Mucosa of descending colon (tissue), 3 donors: ENCODE measurements at regions of chr5 and their contacts with region 1.

Region 1: DNA sequence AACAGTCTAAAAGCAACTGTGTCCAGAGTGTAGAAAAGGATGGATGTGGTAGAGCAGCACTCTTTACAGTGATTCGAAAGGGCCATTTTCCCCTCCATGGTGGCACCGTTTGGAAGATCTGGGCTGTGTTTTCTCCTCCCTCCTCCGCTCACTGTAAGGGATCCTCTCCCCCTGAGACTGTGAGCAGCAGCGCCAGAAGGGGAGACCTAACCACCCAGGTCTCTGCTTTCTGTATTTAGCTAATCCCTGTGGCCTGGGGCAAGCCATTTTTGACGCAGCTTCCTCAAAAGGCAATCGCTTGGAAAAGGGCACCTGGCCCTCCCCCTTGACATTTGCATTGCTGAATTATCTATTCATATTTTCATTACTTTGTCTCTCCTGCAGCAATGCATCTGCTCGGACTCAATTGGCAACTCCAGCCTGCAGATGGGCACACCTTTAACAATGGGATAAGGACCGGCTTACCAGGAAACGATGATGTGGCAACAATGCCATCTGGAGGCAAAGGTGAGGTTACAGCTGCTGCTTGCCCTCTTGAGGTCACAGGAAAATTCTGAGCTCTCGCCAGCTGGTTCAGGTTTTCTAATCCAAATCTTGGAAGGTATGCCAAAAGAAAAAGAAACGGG is 244.3 kb upstream of the WWC1 start:
- DNase-seq: peak in 2 of 3 donors; percentile 42 to 70
- ATAC-seq: peak; percentile 95
- H3K4me3 ChIP-seq: no peak overlapping the region
- H3K4me1 ChIP-seq: no peaks in the 10 kb centered on the region
- CTCF ChIP-seq: no peak

Region 2: DNA sequence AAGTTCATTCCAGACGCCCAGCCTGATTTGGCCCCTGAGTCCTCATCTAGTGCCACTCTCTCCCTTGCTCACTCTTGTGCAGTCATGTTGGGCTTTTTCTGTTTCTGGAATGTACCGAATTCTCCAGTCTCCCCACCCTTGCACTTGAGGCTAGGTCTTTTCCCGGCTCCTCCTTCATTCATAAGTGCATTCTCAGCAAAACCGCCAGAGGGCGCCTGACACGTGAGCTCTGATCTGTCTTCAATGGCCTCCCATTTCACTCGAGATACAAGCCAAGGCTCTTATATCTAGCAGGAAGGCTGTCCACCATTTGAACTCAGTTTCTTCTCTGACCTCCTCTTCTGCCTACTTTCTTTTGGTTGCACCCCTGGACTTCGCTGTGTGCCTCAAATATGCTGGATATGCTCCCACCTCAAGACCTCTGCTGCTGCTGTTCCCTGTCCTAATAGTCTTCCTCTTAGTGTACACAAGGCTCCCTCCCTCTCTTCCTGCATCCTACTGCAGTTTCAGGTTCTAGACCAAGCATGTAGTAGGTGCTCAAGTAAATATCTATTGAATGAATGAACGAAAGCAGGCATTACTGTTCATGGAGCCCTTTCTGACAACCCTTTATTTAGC is 323.8 kb before region 1 on chr5:
- intact Hi-C with region 1: loop called (anchors 10 kb)
- DNase-seq: peak in 2 of 3 donors; percentile 70 to 85
- ATAC-seq: peak; percentile 88
- H3K4me3 ChIP-seq: no peak overlapping the region
- H3K4me1 ChIP-seq: no peaks in the 10 kb centered on the region
- CTCF ChIP-seq: peak; percentile 75

Region 3: DNA sequence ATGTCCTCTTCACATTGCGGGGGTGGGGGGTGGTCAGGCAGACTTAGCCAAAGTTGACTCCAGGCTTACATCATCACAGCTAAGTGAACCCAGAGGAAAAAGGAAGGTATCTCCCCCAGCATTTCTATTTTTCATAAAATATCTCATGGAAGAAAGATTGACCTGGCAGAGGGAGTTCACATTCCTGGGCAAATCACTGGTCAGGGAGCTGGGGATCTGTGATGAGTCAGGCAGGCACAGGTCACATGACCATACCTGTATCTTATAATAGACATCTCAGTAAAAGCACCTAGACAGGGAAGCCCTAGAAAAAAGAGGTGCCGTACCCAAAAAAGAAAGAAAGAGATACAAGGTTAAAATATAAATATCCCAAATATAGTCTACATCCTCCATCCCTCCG is 187.0 kb after region 1 on chr5:
- intact Hi-C with region 1: no loop called
- DNase-seq: no peak
- ATAC-seq: no peak
- H3K4me3 ChIP-seq: no peak overlapping the region
- H3K4me1 ChIP-seq: peaks cover 2% of the 10 kb centered on the region
- CTCF ChIP-seq: no peak